G401 (cell line): ENCODE measurements at regions of chr4 and their contacts with region 1.

Region 1: GRCh38 chr4:2241410-2242353 is at the starts of genes HAUS3 and POLN:
- DNase-seq: peak; percentile 96
- total RNA-seq, gene HAUS3: 12.3 and 15.5 TPM in 2 replicates
- total RNA-seq, gene POLN: 0.17 and 0.49 TPM in 2 replicates

Region 2: DNA sequence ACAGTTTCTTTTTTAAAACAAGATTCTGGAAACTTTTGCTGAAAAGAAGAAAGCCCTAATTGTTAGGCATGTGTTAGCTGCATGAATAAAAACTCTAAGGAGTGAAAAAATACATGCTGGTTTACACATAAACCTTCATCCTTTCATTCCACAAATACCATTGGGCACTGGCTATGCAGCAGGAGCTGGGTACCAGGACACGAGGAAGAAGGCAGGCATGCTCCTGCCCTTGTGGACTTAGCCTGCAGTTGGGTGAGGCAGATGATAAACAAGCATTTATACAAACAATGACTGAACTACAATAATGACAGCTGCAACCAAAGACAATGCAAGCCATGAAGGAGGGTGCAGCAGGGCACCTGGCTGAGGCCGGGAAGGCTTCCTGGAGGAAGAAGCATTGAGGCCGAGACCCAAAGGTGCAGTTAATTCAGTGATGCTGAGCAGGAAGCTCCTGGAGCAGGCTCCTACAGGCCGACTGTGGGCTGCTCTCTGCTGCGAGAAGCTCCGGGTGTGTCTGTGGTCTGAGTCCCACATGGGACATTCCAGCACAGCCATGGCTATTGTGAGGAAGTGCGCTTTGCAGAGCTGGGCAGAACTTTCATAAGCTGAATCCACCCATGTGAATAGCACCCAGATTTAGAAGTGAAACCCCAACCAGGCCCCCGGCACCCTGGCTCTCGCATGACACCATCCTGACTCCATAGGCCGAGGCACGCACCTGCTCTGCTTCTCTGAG is 64.3 kb after region 1 on chr4:
- in situ Hi-C with region 1: loop called (anchors 10 kb)
- DNase-seq: no peak

Region 3: DNA sequence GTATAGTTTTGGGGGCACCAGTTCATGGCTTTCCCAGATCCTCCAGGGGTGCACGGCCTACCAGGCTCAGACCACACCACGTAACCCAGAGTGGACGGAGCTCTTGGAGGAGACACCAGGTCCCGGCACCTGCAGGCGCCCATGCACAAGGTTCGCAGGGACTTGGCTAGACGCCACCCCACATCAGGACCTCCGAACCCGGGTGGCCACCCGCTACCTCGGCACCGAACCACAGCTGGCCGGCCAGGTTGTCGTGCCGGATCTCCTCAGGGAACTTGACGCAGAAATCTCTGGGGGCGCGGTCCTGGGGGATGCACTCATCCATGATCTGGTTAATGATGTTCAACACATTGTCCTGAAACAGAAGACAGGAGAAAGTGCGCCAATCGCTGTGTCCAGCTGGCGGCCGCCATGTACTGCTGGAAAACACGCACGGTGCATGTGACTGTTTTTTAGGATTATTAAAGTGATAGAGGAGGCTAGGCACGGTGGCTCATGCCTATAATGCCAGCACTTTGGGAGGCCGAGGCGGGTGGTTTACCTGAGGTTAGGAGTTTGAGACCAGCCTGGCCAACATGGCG is 99.7 kb after region 1 on chr4:
- in situ Hi-C with region 1: no loop called
- DNase-seq: no peak

Region 4: DNA sequence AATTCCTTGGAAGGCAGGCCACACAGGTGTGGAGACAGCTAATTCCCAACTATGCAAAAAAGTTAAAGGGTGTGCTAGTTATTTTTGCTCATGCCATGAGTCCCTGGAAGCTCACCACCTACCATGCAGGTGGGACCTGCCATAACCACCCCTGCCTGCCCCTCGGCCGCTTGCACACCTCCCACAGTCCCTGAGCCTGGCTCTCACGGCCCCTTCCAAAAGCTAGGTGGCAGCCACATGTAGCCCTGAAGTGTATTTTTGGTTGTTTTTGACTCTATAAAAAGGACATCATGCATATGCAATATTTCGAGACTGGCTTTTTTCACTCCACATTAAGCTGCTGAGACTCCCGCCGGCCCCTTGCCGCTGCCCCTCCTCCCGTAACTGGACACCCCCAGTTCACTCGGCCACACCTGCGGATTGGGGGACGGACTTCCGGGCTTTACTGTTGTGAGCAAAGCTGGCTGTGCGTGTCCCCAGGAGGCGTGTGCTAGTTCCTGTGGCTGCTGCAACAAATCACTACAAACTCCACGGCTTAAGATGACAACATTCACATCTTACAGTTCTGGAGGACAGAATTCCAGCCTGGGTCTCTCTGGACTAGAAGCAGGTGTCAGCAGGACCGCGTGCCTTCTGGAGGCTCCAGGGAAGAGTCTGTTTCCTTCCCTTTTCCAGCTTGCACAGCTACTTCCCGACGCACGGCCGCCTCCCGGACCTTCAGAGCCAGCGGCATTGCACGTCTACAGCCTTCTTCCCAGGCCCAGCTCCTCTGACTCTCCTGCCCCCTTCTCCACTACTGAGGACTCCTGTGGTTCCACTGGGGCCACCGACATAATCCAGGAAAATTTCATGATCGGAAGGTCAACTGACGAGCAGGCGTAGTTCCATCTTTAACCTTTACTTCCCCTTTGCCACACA is 151.9 kb after region 1 on chr4:
- in situ Hi-C with region 1: loop called (anchors 10 kb)
- DNase-seq: peak; percentile 52

Region 5: DNA sequence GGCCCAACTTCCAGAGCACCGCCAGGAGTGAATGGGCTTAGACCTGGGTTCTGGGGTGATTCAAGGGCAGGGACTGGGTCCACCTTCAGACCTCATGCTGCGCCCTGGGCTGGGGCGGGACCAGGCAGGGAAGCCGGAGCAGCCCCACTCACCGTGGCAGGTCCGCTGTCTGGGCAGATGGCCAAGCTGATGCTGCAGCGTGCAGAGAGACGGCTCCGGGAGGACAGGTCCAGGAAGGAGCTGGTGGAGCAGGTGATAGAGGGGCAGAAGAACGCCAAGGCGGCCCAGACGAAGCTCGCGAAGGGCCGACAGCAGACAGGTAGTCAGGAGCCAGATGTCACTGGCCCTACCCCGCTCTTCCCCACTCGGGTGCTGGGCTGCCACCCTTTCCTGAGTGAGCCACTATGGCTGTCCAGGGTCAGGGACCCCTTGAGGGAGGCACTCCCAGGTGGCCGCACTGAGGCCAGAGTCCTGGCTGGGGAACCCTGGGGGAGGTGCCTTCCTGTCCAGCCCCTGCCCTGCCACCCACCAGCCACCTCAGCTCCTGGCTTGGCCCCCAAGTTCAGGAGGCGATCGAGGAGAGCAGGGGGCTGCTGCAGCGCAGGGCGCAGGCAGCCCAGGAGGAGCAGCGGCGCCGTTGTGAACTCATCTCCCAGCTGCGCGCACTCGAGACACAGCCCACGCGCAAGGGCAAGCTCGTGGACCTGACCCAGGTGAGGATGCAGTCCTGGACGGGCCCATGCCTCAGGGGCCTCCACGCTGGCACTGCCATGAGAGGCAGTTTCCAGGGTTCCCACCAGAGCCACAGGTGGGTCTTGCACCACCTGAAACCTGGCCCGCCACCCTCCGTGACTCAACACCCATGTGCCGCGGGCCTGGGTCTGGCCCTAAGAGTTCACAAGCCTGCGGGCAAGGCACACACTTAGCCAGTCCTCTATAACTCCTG is 217.1 kb after region 1 on chr4:
- in situ Hi-C with region 1: loop called (anchors 10 kb)
- DNase-seq: no peak